ENCODE measurements at regions of chr1 and their contacts with region 1.

Region 1: DNA sequence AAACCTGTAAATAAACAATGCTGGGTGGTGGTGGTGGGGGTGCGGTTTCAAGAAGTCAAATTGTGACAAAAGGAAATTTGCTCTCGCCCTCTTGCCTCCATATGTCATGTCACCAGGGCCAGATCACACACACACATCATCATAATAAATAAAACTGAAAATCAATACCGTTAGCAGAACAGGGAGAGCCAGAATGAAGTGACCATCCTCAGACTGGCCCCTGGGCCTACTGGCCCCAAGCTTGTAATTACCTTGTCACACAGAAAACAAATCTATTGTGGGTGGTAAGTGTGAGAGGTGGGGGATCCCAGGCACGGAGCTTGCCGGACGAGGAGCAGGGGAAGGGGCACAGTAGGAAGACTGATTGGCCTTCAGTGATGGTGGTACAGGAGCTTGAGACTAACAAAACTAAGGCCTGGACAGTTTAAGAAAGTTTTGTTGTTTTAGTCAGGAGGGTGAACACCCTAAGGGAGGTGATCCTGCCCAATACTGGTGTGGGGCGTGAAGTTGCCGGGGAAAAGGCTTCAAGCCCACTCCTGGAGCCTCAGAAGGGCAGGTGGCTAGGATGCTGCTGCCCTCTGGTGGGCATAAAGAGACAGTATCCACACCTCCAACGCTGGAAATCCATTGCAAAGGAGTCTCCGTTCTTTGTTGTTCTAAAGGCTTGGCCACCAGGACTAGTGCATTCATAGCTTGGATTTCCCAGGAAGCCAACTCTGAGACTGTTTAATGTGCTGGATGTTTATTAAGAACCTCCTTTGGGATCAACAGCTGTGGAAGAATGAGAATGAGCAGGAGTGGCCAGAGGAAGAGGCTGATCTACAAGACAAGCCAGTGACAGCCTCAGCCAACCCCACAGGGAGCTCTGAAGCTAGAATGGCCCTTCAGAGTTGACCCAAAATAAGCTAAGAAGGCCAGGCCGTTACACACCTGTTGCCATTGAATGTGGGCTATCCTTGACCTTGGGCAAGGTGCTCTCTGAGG is 8.1 kb upstream of the C1orf216 start:
- DNase-seq: no peak
- H3K4me3 ChIP-seq: no peak overlapping the region
- CTCF ChIP-seq: peak; percentile 87

Region 2: DNA sequence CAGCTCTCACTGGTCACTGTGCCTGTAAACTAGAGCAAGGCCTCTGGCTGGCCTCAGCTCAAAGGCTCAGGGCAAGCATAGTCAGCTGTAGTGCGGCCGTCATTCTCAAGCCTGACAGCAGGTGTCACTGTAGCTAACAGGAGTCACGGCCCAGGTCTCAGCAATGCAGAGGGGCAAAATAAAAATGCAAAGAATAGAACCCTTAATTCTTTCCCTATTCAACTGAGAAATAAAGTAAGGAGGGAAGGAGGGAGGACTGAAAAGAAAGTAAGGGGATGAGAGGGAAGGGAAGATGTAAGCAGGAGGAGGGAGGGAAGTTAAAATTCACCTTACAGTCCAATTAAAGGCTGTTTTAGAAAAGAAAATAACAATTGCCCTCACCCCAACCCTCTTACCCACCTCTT is 275.6 kb before region 1 on chr1:
- CTCF ChIA-PET with region 1: interaction called, 146 read pairs
- POLR2A ChIA-PET with region 1: no interaction called
- DNase-seq: no peak
- H3K4me3 ChIP-seq: no peak overlapping the region
- CTCF ChIP-seq: peak; percentile 88

Region 3: DNA sequence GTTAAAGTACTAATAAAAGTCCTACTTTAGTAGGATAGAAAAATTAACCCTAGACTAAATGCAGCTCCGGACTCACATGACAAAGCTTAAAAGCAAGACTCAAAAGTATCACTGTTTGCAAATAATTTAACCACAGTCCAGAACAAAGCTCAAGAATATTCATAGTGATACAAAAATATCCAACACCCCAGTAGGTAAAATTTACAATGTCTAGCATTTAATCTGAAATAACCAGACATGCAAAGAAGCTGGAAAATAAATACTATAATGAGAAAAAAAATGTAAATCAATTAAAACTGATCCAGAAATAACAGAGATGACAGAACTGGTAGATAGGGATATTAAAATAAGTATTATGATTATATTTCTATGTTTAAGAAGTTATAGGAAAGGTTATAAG is 236.5 kb before region 1 on chr1:
- CTCF ChIA-PET with region 1: no interaction called
- POLR2A ChIA-PET with region 1: no interaction called
- DNase-seq: no peak
- H3K4me3 ChIP-seq: no peak overlapping the region
- CTCF ChIP-seq: no peak

Region 4: GRCh38 chr1:35564037-35564883 is 162.5 kb before region 1 on chr1:
- CTCF ChIA-PET with region 1: interaction called, 657 read pairs
- POLR2A ChIA-PET with region 1: interaction called, 4 read pairs
- DNase-seq: no peak
- H3K4me3 ChIP-seq: no peak overlapping the region
- CTCF ChIP-seq: peak; percentile 80

Region 5: GRCh38 chr1:35585281-35585680 is 141.5 kb before region 1 on chr1:
- CTCF ChIA-PET with region 1: interaction called, 21 read pairs
- POLR2A ChIA-PET with region 1: no interaction called
- DNase-seq: no peak
- H3K4me3 ChIP-seq: no peak overlapping the region
- CTCF ChIP-seq: no peak

Region 6: GRCh38 chr1:35707601-35708440 is 18.9 kb before region 1 on chr1:
- CTCF ChIA-PET with region 1: interaction called, 212 read pairs
- POLR2A ChIA-PET with region 1: no interaction called
- DNase-seq: no peak
- H3K4me3 ChIP-seq: peak overlapping the region; percentile 52
- CTCF ChIP-seq: no peak

Region 7: DNA sequence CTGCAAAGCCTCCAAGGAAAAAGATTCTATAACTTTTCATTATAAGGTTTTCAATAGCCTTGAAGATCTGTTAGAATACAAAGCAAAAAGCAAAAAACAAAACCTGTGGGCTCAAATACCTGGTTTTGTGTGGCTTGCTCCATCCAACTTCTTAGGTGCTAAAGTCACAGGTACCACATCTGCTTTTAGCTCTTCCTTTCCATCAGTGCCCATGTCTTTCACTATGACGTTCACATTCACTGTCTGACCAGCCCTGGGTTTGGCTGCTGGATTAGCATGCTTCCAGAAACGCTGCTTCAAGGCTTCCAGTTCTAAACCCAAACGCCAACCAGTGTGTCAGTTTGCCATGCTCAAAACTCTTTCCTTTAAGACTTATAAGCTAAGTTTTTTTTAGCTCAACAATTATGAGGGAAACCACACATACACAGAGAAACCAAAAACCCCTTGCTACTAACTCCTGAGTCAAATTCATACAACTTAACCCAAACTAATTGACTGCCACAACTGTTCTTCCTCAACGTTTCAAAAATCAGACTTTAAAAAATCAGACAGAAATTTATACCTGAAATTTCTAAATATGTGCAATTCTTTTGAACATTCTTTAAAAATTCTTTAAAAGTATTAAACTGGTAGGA is 27.0 kb after region 1 on chr1:
- CTCF ChIA-PET with region 1: interaction called, 203 read pairs
- POLR2A ChIA-PET with region 1: no interaction called
- DNase-seq: no peak
- H3K4me3 ChIP-seq: no peak overlapping the region
- CTCF ChIP-seq: no peak

Region 8: GRCh38 chr1:35769188-35769758 is 42.5 kb after region 1 on chr1:
- CTCF ChIA-PET with region 1: interaction called, 52 read pairs
- POLR2A ChIA-PET with region 1: interaction called, 3 read pairs
- DNase-seq: no peak
- H3K4me3 ChIP-seq: peak overlapping the region; percentile 81
- CTCF ChIP-seq: no peak

Region 9: DNA sequence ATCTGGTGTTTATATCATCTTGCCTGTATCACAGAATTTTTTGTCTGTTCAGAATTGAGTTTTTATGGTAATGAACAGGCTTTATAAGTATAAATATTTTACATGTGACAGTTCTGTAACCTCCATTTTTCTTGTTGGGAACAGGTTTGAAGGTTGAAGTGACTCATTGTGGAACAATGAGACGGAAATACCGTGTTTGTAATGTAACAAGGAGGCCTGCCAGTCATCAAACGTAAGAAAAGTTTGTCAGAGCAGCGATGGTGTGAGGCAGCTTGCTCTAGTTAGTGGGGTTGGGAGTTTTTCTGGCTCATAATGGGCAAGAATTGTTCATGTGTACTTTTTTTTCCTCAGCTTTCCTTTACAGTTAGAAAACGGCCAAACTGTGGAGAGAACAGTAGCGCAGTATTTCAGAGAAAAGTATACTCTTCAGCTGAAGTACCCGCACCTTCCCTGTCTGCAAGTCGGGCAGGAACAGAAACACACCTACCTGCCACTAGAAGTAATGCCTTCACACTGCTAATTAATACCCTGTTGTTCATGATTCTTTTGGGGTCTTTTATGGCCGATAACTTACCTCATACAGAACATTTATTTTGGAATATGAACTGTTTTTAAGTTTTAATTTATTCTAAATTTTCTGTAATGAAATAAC is 281.9 kb after region 1 on chr1:
- CTCF ChIA-PET with region 1: no interaction called
- POLR2A ChIA-PET with region 1: no interaction called
- DNase-seq: no peak
- H3K4me3 ChIP-seq: no peak overlapping the region
- CTCF ChIP-seq: no peak